GM12878 (cell line): ENCODE measurements at regions of chr14 and their contacts with region 1.

Region 1: DNA sequence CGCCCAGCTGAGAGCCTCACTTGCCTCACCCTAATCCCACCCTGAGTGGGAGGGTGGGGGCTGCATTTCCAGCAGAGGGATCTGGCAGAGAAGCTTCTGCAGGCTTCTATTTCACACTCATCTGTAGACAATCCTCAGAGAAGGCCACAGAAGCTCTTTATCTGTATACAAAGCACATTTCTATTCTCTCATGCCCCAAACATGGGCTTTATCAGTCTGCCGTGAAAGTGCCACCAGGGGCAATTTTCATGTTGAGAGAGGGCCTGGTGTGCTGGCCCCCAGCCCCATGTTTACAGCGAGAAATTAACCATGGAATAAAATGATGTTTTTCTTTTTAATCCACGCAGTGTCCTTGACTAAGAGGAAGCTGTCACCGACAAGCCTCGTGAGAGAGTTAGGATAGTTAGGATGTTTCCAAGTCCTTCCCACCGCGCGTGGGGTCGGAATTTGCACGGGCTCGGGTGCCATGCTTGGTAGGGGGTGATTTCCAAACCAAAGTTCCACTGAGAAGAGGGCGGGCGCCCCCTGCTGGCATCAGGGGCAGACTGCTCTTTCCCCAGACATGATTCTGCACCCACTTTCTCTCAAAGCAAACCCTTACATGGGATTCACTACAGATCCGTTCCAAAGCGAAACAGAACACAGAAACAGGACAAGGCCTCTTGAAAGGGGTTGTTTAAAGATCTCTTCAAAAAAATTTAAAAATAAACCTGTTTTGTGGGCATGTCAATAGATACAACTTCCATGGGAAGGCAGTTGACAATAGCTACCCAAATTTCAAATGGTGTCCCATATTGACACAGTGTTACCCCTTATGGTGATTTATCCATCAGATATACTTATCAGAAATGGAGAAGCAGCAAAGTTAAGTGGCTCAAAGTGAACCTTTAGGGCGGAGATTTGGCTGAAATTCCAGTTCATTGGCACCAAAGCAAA is 19.4 kb downstream of the BDKRB1 start:
- DNase-seq: peak; percentile 7
- ATAC-seq: peak; percentile 86
- H3K4me3 ChIP-seq: no peak overlapping the region
- H3K27ac ChIP-seq: no peak overlapping the region
- H3K4me1 ChIP-seq: no peaks in the 10 kb centered on the region
- H3K27me3 ChIP-seq: no peaks in the 10 kb centered on the region
- CTCF ChIP-seq: peak; percentile 87 to 95 (median 89)
- EP300 ChIP-seq: no peak
- POLR2A ChIP-seq: no peak
- RAD21 ChIP-seq: peak; percentile 81

Region 2: DNA sequence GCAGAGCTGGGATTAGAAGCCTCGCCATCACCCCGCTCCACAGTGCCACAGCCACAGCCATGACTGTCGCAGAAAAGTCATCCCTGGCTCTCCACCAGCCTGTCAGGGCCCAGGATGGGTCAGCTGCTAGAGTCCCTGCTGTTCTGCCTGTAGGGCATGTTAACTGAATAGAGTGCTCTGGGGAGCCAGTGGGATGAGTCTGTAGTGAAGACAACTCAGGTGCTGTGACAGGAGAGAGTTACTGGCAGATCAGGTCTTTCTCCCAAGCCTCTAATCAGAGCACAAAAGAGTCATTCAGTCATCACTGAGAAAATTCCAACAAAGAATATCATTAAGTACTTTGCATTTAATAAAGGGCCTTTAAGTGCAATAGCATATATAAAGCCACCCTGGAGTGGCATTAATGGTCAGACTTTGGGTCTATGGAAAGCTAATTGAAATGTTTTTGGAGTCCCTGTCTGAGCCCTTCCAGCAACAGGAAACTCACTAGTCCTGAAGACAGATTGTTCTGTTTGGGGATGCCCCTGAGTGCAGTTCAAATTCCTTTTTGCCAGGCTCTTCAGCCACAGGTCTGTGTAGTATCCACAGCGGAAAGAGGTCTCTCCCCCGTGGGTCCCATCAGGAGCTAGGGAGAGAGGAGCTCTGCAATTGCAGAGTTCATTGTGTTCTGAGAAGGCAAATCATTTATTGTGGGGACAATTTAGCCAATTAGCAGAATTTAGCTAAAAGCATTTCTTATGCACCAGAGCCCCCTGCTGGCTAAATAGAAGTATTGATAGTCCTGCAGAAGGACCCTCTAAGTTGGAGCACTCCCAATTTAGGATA is 281.5 kb before region 1 on chr14:
- CTCF ChIA-PET with region 1: interaction called, 6 read pairs
- POLR2A ChIA-PET with region 1: no interaction called
- RAD21 ChIA-PET with region 1: interaction called, 4 read pairs
- SMC1A ChIA-PET with region 1: interaction called, 4 read pairs
- in situ Hi-C with region 1: no loop called
- intact Hi-C with region 1: loop called (anchors 2 kb)
- DNase-seq: peak; percentile 17
- ATAC-seq: peak; percentile 75
- H3K4me3 ChIP-seq: no peak overlapping the region
- H3K27ac ChIP-seq: no peak overlapping the region
- H3K4me1 ChIP-seq: no peaks in the 10 kb centered on the region
- H3K27me3 ChIP-seq: peaks cover 0 to 2% of the 10 kb centered on the region in 2 experiments; a peak in 2 of 4 replicates
- CTCF ChIP-seq: peak; percentile 78 to 80 (median 79)
- EP300 ChIP-seq: no peak
- POLR2A ChIP-seq: no peak
- RAD21 ChIP-seq: peak; percentile 93

Region 3: DNA sequence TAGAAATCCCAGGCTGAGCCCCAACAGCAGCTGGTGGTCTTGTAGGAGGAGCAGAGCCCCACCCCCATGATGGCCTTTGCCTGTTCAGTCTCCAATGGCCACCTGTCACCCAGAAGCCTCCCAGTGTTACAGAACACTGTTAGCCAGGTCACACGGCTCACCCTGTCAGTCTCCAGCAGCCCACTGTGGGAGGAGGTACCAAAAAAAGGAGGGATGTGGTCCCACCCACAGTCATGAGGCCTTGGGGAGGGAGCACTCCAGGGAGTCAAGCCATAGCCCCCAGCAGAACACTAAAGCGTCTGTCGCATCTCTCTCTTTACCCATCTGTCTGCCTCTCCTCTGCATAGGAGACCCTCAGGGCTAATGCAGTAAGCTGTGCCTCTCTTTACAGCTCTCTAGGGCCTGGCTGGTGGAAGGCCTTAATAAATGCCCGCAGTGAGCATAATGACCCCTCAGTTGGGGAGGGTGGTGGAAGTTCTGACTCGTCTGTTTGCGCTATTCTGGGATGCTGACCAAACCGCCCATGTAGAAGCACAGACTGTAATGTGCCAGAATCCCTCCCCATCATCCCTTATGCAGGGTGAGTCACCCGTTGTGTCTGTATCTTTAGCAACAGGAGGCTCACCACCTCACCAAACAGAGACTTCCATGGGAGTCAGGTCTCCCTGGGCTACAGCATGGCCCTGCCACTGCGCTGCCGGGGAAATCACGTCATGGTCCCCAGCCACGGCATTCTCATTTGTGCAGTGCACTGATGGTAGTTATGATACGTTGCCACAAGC is 221.7 kb before region 1 on chr14:
- CTCF ChIA-PET with region 1: interaction called, 10 read pairs
- POLR2A ChIA-PET with region 1: no interaction called
- RAD21 ChIA-PET with region 1: no interaction called
- SMC1A ChIA-PET with region 1: interaction called, 14 read pairs
- in situ Hi-C with region 1: no loop called
- intact Hi-C with region 1: loop called (anchors 5 kb)
- DNase-seq: no peak
- ATAC-seq: no peak
- H3K4me3 ChIP-seq: no peak overlapping the region
- H3K27ac ChIP-seq: no peak overlapping the region
- H3K4me1 ChIP-seq: no peaks in the 10 kb centered on the region
- H3K27me3 ChIP-seq: peaks cover 0 to 4% of the 10 kb centered on the region in 2 experiments; a peak in 3 of 4 replicates
- CTCF ChIP-seq: no peak
- EP300 ChIP-seq: no peak
- POLR2A ChIP-seq: no peak
- RAD21 ChIP-seq: no peak

Region 4: GRCh38 chr14:96260341-96260821 is 15.1 kb before region 1 on chr14:
- CTCF ChIA-PET with region 1: interaction called, 20 read pairs
- POLR2A ChIA-PET with region 1: no interaction called
- RAD21 ChIA-PET with region 1: no interaction called
- SMC1A ChIA-PET with region 1: no interaction called
- in situ Hi-C with region 1: no loop called
- intact Hi-C with region 1: no loop called
- DNase-seq: no peak
- ATAC-seq: no peak
- H3K4me3 ChIP-seq: no peak overlapping the region
- H3K27ac ChIP-seq: no peak overlapping the region
- H3K4me1 ChIP-seq: no peaks in the 10 kb centered on the region
- H3K27me3 ChIP-seq: peaks cover 4 to 5% of the 10 kb centered on the region in 2 experiments; a peak in 3 of 4 replicates
- CTCF ChIP-seq: no peak
- EP300 ChIP-seq: no peak
- POLR2A ChIP-seq: no peak
- RAD21 ChIP-seq: no peak

Region 5: GRCh38 chr14:96285667-96286066 is 10.2 kb after region 1 on chr14:
- CTCF ChIA-PET with region 1: interaction called, 12 read pairs
- POLR2A ChIA-PET with region 1: no interaction called
- RAD21 ChIA-PET with region 1: interaction called, 3 read pairs
- SMC1A ChIA-PET with region 1: interaction called, 4 read pairs
- in situ Hi-C with region 1: no loop called
- intact Hi-C with region 1: no loop called
- DNase-seq: no peak
- ATAC-seq: no peak
- H3K4me3 ChIP-seq: no peak overlapping the region
- H3K27ac ChIP-seq: no peak overlapping the region
- H3K4me1 ChIP-seq: no peaks in the 10 kb centered on the region
- H3K27me3 ChIP-seq: no peaks in the 10 kb centered on the region
- CTCF ChIP-seq: no peak
- EP300 ChIP-seq: no peak
- POLR2A ChIP-seq: no peak
- RAD21 ChIP-seq: no peak

Region 6: GRCh38 chr14:96297000-96297399 is 21.6 kb after region 1 on chr14:
- CTCF ChIA-PET with region 1: interaction called, 12 read pairs
- POLR2A ChIA-PET with region 1: no interaction called
- RAD21 ChIA-PET with region 1: no interaction called
- SMC1A ChIA-PET with region 1: no interaction called
- in situ Hi-C with region 1: no loop called
- intact Hi-C with region 1: no loop called
- DNase-seq: no peak
- ATAC-seq: peak; percentile 66; the same call in 2 of the 3 replicates
- H3K4me3 ChIP-seq: no peak overlapping the region
- H3K27ac ChIP-seq: no peak overlapping the region
- H3K4me1 ChIP-seq: no peaks in the 10 kb centered on the region
- H3K27me3 ChIP-seq: no peaks in the 10 kb centered on the region
- CTCF ChIP-seq: peak; percentile 19 to 50 (median 39); a peak in 4 of 6 replicates
- EP300 ChIP-seq: no peak
- POLR2A ChIP-seq: no peak
- RAD21 ChIP-seq: peak; percentile 62

Region 7: DNA sequence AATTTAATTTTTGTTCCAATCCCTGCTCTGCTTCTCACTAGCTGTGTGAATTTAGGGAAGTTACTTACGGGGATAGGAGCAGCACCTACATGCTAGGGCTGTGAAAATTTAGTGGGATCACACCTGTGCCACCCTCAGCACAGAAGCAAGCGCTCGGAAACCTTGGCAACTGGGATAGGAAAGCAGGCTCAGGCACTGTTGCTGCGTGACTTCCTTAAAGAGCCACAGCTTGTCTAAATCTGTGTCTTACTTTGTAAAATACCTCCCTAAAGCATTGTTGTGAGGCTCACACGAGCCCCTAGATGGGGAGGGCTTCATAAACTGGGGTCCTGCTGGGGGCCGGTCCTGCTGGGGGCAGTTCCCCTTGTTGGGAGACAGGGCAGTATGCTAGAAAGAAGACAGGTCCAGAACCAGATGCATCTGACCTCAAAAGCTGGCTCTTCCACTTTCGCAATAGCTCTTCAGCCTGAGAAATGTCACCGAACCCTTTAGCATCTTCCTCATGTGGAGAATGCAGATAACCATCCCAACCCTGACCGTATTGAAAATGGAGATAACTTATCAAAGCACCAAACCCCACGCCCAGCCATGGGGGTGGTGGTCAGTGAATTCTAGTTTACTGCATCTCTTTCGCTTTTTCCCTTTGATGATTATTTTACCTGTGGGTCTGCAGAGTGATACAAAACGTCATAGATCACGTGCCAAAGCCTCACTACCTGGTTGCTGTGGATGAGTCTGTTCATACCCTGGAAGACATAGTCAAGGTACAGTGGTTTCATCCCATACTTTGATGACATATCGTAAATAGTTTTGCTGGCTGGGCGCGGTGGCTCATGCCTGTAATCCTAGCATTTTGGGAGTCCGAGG is 170.6 kb after region 1 on chr14:
- CTCF ChIA-PET with region 1: no interaction called
- POLR2A ChIA-PET with region 1: no interaction called
- RAD21 ChIA-PET with region 1: no interaction called
- SMC1A ChIA-PET with region 1: no interaction called
- in situ Hi-C with region 1: no loop called
- intact Hi-C with region 1: no loop called
- DNase-seq: no peak
- ATAC-seq: no peak
- H3K4me3 ChIP-seq: no peak overlapping the region
- H3K27ac ChIP-seq: no peak overlapping the region
- H3K4me1 ChIP-seq: no peaks in the 10 kb centered on the region
- H3K27me3 ChIP-seq: no peaks in the 10 kb centered on the region; a peak in 1 of 4 replicates
- CTCF ChIP-seq: no peak
- EP300 ChIP-seq: no peak
- POLR2A ChIP-seq: no peak
- RAD21 ChIP-seq: no peak